ENCODE measurements at regions of chr20 and their contacts with region 1.

Region 1: GRCh38 chr20:45322952-45323383 is 14.9 kb upstream of the MATN4 start:
- DNase-seq: peak; percentile 65 to 82 (median 76)
- H3K4me3 ChIP-seq: no peak overlapping the region
- H3K4me3 Mint-ChIP-seq: no peak overlapping the region
- H3K27ac ChIP-seq: no peak overlapping the region
- H3K27ac Mint-ChIP-seq: no peak overlapping the region
- H3K4me1 ChIP-seq: peaks cover 20 to 21% of the 10 kb centered on the region in 2 donors
- H3K4me1 Mint-ChIP-seq: peaks cover 24% of the 10 kb centered on the region
- H3K27me3 ChIP-seq: no peaks in the 10 kb centered on the region
- H3K27me3 Mint-ChIP-seq: peaks cover 0 to 3% (median 1%) of the 10 kb centered on the region in 3 donors
- CTCF ChIP-seq: peak; percentile 48

Region 2: GRCh38 chr20:45293041-45294002 is 29.6 kb before region 1 on chr20:
- intact Hi-C with region 1: no loop called
- DNase-seq: peak; percentile 61 to 70 (median 65)
- H3K4me3 ChIP-seq: peak overlapping the region; percentile 16 to 73 (median 24)
- H3K4me3 Mint-ChIP-seq: peak overlapping the region; percentile 76 to 88
- H3K27ac ChIP-seq: no peak overlapping the region
- H3K27ac Mint-ChIP-seq: peak overlapping the region in 1 of 7 donors; percentile 26
- H3K4me1 ChIP-seq: peaks cover 12 to 17% of the 10 kb centered on the region in 2 donors
- H3K4me1 Mint-ChIP-seq: peaks cover 17% of the 10 kb centered on the region
- H3K27me3 ChIP-seq: peaks cover 13 to 28% of the 10 kb centered on the region in 2 donors
- H3K27me3 Mint-ChIP-seq: peaks cover 23 to 35% (median 28%) of the 10 kb centered on the region in 3 donors
- CTCF ChIP-seq: peak; percentile 99

Region 3: DNA sequence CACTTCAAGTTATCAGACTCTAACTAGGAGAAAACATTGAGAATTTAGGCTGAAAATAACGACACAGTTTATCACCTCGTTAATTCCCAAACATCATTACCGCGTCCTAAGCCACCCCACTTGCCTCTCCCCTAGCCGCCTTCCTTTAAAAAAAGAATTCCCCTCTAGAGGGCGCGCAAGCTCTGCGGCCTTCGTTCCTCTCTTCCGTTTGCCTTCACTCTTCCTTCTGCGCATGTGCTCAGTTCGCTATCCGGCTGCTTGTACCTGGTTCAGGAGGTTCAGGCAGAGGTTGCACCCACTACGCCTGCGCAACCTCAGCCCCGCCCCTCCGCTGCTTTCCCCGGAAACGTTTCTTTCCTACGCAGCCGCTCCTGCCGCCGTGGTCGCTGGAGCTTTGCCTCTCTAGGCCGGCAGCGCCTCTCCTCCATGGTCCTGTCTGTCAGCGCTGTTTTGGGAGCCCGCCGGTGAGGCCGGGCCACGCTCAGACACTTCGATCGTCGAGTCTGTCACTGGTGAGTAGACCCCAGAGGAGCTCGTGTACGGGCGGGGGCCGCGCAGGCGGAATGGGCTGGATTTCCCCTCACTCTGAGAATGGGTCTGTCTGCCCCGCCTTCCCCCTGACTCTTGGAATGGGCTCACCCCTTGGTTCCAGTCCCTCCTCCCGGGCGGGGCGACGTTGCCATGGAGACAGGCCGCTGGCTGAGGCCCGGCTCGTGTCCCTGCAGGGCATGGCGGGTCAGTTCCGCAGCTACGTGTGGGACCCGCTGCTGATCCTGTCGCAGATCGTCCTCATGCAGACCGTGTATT is 40.0 kb after region 1 on chr20 and contains the start of gene SYS1:
- intact Hi-C with region 1: loop called in 1 of 2 experiments (anchors 5 kb)
- DNase-seq: peak; percentile 98
- H3K4me3 ChIP-seq: peak within 1 kb of the TSS; percentile 66 to 91 (median 77)
- H3K4me3 Mint-ChIP-seq: peak within 1 kb of the TSS; percentile 95 to 99
- H3K27ac ChIP-seq: peak within 1 kb of the TSS; percentile 89 to 98
- H3K27ac Mint-ChIP-seq: peak within 1 kb of the TSS; percentile 99 to 100 (median 100)
- H3K4me1 ChIP-seq: peaks cover 54 to 68% of the 10 kb centered on the region in 2 donors
- H3K4me1 Mint-ChIP-seq: peaks cover 62% of the 10 kb centered on the region
- H3K27me3 ChIP-seq: no peaks in the 10 kb centered on the region
- H3K27me3 Mint-ChIP-seq: peaks cover 0 to 2% (median 0%) of the 10 kb centered on the region in 3 donors
- CTCF ChIP-seq: peak; percentile 86
- polyA plus RNA-seq, gene SYS1: 16.8 to 23.1 (median 22.1) TPM

Region 4: GRCh38 chr20:45436732-45437391 is 113.9 kb after region 1 on chr20:
- intact Hi-C with region 1: loop called (anchors 2 to 5 kb)
- DNase-seq: peak; percentile 70 to 83 (median 80)
- H3K4me3 ChIP-seq: peak overlapping the region; percentile 47 to 82 (median 62)
- H3K4me3 Mint-ChIP-seq: peak overlapping the region; percentile 83 to 91
- H3K27ac ChIP-seq: peak overlapping the region in 1 of 2 donors; percentile 42
- H3K27ac Mint-ChIP-seq: peak overlapping the region in 4 of 7 donors; percentile 63 to 80 (median 74)
- H3K4me1 ChIP-seq: peaks cover 9 to 16% of the 10 kb centered on the region in 2 donors
- H3K4me1 Mint-ChIP-seq: peaks cover 13% of the 10 kb centered on the region
- H3K27me3 ChIP-seq: no peaks in the 10 kb centered on the region
- H3K27me3 Mint-ChIP-seq: peaks cover 0 to 2% (median 2%) of the 10 kb centered on the region in 3 donors
- CTCF ChIP-seq: peak; percentile 96

Region 5: DNA sequence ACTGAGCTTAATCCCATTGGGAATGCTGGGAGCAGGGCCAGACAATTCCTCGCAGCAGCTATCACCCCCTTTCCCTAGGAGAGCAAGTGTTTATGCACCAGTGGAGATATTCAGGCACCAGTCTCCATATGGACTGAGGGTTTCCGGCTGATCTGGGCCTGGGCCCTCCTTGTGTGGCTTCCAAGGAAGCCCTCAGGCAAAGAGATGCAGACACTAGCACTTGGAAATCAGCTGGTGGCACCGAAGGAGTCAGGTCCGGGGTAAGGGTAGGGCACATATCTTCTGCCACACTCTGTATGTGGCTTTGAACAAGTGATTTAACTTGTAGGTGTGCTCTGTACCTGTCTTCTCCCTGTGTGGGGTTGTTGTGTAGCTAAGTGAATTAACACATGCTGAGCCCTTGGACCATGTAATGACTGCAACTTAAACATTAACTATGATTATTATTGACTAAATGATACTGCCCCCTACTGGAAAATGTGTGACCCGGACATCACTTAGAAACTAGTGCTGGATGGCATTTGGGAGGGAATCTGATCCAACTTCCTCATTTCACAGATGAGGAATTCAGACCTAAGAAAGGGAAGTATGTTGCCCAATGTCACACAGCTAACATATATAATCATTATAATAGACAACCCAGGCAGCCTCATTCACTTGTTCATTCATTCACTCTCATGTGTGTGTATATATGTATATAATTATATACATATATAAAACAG is 127.3 kb after region 1 on chr20:
- intact Hi-C with region 1: loop called in 1 of 2 experiments (anchors 5 kb)
- DNase-seq: peak; percentile 85 to 94 (median 93)
- H3K4me3 ChIP-seq: no peak overlapping the region
- H3K4me3 Mint-ChIP-seq: no peak overlapping the region
- H3K27ac ChIP-seq: no peak overlapping the region
- H3K27ac Mint-ChIP-seq: no peak overlapping the region
- H3K4me1 ChIP-seq: peaks cover 37 to 41% of the 10 kb centered on the region in 2 donors
- H3K4me1 Mint-ChIP-seq: peaks cover 33% of the 10 kb centered on the region
- H3K27me3 ChIP-seq: no peaks in the 10 kb centered on the region
- H3K27me3 Mint-ChIP-seq: peaks cover 3 to 11% (median 6%) of the 10 kb centered on the region in 3 donors
- CTCF ChIP-seq: peak; percentile 88

Region 6: GRCh38 chr20:45771182-45771759 is 448.3 kb after region 1 on chr20:
- intact Hi-C with region 1: loop called (anchors 1 to 2 kb)
- DNase-seq: peak; percentile 69 to 71 (median 70)
- H3K4me3 ChIP-seq: no peak overlapping the region
- H3K4me3 Mint-ChIP-seq: no peak overlapping the region
- H3K27ac ChIP-seq: no peak overlapping the region
- H3K27ac Mint-ChIP-seq: peak overlapping the region in 1 of 7 donors; percentile 23
- H3K4me1 ChIP-seq: no peaks in the 10 kb centered on the region
- H3K4me1 Mint-ChIP-seq: peaks cover 3% of the 10 kb centered on the region
- H3K27me3 ChIP-seq: no peaks in the 10 kb centered on the region
- H3K27me3 Mint-ChIP-seq: peaks cover 3 to 10% (median 8%) of the 10 kb centered on the region in 3 donors
- CTCF ChIP-seq: peak; percentile 89